B cell (primary cell): ENCODE measurements at regions of chr7 and their contacts with region 1.

Region 1: DNA sequence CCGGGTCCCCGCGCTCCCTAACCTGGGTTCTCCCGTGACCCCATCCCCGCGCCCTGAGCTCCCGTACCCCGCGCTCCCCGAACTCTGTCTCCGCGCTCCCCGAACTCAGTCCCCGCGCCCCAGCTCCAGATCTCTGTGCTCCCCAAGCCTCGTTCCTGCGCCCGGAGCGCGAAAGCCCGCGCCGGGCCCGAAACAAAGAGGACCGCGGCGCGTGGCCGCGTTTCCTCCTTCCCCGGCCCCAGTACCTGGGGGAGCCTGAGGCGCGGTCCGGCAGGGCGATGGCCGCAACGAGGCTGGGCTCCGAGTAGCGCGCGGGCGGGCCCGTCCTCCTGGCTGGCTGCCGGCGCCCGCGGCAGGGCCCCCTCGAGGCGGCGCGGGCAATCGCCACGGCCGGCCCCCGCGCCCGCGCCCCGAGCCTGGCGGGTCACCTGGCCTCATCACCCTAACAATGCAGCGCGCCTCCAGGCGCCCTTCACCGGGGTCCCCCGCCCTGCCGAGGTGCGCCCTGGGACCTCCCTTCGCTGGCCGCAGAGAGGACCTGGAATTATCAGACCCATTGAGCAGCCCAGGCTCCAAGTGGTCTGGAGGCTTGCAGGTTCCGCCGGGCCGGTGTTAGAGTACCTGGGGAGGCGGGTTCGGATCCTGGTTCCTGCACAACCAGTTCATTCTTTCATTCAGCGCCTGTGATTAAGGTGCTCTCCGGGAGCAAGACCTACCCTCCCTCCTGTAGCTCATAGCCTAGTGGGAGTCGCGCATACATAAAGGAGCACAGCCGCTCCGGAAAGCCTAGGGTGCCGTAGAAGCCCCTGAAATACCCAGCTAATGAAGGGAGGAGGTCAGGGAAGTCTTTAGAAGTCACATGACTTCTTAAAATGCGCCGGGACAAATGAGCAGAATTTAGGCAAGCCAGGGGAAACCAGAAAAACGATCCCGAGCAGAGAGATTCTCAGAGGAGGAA is at the start of gene TNS3:
- DNase-seq: peak; percentile 76
- ATAC-seq: peak; percentile 80
- H3K4me3 ChIP-seq: peak within 1 kb of the TSS; percentile 58 to 75 (median 70)
- H3K4me3 Mint-ChIP-seq: peak within 1 kb of the TSS; percentile 83
- H3K27ac ChIP-seq: peak within 1 kb of the TSS; percentile 13 to 40
- H3K27ac Mint-ChIP-seq: peak within 1 kb of the TSS; percentile 90
- H3K4me1 ChIP-seq: peaks cover 37 to 55% of the 10 kb centered on the region in 2 donors
- H3K4me1 Mint-ChIP-seq: peaks cover 61% of the 10 kb centered on the region
- H3K27me3 ChIP-seq: peaks cover 0 to 8% (median 0%) of the 10 kb centered on the region in 4 experiments
- H3K27me3 Mint-ChIP-seq: no peaks in the 10 kb centered on the region
- CTCF ChIP-seq: peak; percentile 33
- total RNA-seq, gene TNS3: 70.1 and 77.5 TPM in 2 replicates

Region 2: DNA sequence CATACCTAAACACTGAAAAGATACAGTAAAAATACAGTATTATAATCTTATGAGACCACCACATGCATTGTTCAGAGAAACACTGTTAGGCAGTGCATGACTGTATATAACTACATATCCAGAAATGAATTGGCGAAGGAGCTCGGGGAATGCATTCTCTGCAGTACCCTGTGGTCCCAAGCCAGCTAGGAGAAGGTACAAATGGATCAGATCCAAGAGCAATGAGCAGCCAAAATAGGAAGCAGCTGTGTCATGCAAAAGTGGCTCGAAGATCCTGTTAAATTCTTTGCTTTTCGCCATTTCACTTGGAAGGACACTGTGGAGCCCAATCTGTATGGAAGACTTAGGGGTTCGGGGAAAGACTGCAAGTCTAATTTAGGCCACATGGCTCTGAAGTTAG is 335.0 kb before region 1 on chr7:
- CTCF ChIA-PET with region 1: no interaction called
- POLR2A ChIA-PET with region 1: no interaction called
- intact Hi-C with region 1: no loop called
- DNase-seq: no peak
- ATAC-seq: no peak
- H3K4me3 ChIP-seq: no peak overlapping the region
- H3K4me3 Mint-ChIP-seq: no peak overlapping the region
- H3K27ac ChIP-seq: no peak overlapping the region
- H3K27ac Mint-ChIP-seq: no peak overlapping the region
- H3K4me1 ChIP-seq: no peaks in the 10 kb centered on the region
- H3K4me1 Mint-ChIP-seq: no peaks in the 10 kb centered on the region
- H3K27me3 ChIP-seq: no peaks in the 10 kb centered on the region
- H3K27me3 Mint-ChIP-seq: no peaks in the 10 kb centered on the region
- CTCF ChIP-seq: no peak

Region 3: GRCh38 chr7:47543706-47544105 is 38.4 kb before region 1 on chr7:
- CTCF ChIA-PET with region 1: interaction called, 4 read pairs
- POLR2A ChIA-PET with region 1: no interaction called
- intact Hi-C with region 1: loop called (anchors 1 kb)
- DNase-seq: peak; percentile 64
- ATAC-seq: peak; percentile 91
- H3K4me3 ChIP-seq: peak overlapping the region in 1 of 5 experiments; percentile 14
- H3K4me3 Mint-ChIP-seq: peak overlapping the region; percentile 67
- H3K27ac ChIP-seq: peak overlapping the region; percentile 34 to 38
- H3K27ac Mint-ChIP-seq: peak overlapping the region; percentile 88
- H3K4me1 ChIP-seq: peaks cover 18 to 23% of the 10 kb centered on the region in 2 donors
- H3K4me1 Mint-ChIP-seq: peaks cover 54% of the 10 kb centered on the region
- H3K27me3 ChIP-seq: no peaks in the 10 kb centered on the region
- H3K27me3 Mint-ChIP-seq: peaks cover 2% of the 10 kb centered on the region
- CTCF ChIP-seq: no peak

Region 4: DNA sequence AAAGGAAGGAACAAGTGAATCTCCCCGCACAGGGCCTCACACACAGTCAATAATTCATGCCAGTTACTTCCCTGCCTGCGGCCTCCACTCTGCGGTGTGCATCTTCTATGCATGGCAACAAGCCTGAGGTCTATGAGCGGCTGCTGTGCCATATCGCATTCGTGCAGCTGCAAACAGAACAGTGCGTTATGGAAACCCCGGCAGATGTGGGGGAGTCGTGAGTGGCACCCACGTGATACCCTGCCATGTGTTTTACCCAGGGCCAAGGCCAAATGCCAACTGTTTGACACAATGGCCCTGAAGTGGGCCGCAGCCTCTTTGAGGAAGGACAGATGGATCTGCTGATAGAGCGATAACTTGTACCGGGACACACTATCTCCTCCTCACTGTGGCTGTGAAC is 13.5 kb before region 1 on chr7:
- CTCF ChIA-PET with region 1: interaction called, 10 read pairs
- POLR2A ChIA-PET with region 1: interaction called, 7 read pairs
- intact Hi-C with region 1: no loop called
- DNase-seq: peak; percentile 65
- ATAC-seq: peak; percentile 61
- H3K4me3 ChIP-seq: no peak overlapping the region
- H3K4me3 Mint-ChIP-seq: peak overlapping the region; percentile 71
- H3K27ac ChIP-seq: no peak overlapping the region
- H3K27ac Mint-ChIP-seq: peak overlapping the region; percentile 73
- H3K4me1 ChIP-seq: peaks cover 40 to 63% of the 10 kb centered on the region in 2 donors
- H3K4me1 Mint-ChIP-seq: peaks cover 66% of the 10 kb centered on the region
- H3K27me3 ChIP-seq: no peaks in the 10 kb centered on the region
- H3K27me3 Mint-ChIP-seq: no peaks in the 10 kb centered on the region
- CTCF ChIP-seq: no peak